HepG2 (cell line): ENCODE measurements at regions of chr1 and their contacts with region 1.

Region 1: DNA sequence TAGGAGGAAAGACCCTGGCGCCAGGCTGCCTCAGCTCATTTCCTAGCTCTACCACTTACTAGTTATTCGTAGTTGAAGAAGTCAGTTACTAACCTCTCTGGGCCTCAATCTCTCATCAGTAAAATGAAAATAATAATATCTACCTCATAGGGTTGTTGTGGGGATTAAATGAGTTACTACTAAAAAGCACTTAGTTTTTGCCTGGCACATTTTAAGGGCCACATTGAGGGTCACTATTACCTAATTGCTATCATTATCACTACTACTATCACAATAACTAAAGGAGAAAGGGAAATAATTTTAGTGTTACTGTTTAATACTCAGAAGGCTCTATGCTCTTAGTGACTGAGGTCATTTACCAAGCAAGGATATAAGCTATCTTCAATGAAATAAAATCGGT is 25.0 kb downstream of the TRIT1 start:
- DNase-seq: no peak
- ATAC-seq: no peak
- H3K4me3 ChIP-seq: no peak overlapping the region
- H3K27ac ChIP-seq: no peak overlapping the region
- H3K4me1 ChIP-seq: peaks cover 18% of the 10 kb centered on the region
- H3K27me3 ChIP-seq: no peaks in the 10 kb centered on the region
- CTCF ChIP-seq: no peak
- EP300 ChIP-seq: no peak
- POLR2A ChIP-seq: no peak
- RAD21 ChIP-seq: no peak

Region 2: GRCh38 chr1:39890880-39891279 is 32.6 kb after region 1 on chr1:
- CTCF ChIA-PET with region 1: no interaction called
- POLR2A ChIA-PET with region 1: no interaction called
- in situ Hi-C with region 1: no loop called
- intact Hi-C with region 1: loop called (anchors 1 kb)
- DNase-seq: no peak
- ATAC-seq: no peak
- H3K4me3 ChIP-seq: peak overlapping the region in 1 of 3 experiments; percentile 28; a peak in 1 of 6 replicates
- H3K27ac ChIP-seq: no peak overlapping the region
- H3K4me1 ChIP-seq: peaks cover 26% of the 10 kb centered on the region
- H3K27me3 ChIP-seq: peaks cover 0 to 9% of the 10 kb centered on the region in 2 experiments; a peak in 2 of 5 replicates
- CTCF ChIP-seq: no peak
- EP300 ChIP-seq: no peak
- POLR2A ChIP-seq: no peak
- RAD21 ChIP-seq: no peak